ENCODE measurements at regions of chr22 and their contacts with region 1.

Region 1: DNA sequence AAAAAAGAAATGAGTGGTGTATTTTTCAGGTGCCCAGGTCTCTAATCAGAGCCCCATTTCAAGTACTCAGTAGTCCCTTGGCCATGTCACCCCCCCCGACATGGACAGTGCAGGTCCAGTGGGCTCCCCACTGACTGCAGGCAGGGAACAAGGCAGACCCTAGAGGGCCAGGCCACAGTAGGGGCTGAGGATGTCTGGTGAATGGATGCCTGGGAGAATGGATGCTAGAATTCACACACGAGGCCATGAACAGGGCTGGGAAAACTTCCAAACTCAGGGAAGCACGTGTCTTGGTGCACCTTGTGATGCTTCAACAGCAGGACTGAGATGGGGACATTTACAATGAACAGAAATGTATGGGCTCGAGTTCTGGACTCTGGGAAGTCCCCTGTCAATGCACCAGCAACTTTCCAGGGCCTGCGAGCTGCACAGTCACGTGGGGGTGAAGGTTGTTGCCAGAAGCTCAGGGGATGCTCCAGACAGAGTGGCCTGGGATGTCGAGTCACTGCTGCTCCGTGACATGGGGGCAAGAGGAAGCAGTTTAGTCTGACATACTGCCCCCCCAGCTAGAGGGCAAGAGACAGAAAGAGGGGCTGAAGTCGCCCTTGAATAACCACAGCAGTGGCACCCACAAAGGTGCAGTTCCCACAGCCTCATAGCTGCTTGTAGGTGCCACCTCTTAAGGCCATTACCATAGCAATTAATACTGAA is 3.1 kb downstream of the APOBEC3G start:
- DNase-seq: no peak
- H3K4me3 Mint-ChIP-seq: peak overlapping the region; percentile 19
- H3K27ac Mint-ChIP-seq: peak overlapping the region; percentile 55
- H3K4me1 Mint-ChIP-seq: peaks cover 53% of the 10 kb centered on the region
- H3K27me3 Mint-ChIP-seq: no peaks in the 10 kb centered on the region

Region 2: DNA sequence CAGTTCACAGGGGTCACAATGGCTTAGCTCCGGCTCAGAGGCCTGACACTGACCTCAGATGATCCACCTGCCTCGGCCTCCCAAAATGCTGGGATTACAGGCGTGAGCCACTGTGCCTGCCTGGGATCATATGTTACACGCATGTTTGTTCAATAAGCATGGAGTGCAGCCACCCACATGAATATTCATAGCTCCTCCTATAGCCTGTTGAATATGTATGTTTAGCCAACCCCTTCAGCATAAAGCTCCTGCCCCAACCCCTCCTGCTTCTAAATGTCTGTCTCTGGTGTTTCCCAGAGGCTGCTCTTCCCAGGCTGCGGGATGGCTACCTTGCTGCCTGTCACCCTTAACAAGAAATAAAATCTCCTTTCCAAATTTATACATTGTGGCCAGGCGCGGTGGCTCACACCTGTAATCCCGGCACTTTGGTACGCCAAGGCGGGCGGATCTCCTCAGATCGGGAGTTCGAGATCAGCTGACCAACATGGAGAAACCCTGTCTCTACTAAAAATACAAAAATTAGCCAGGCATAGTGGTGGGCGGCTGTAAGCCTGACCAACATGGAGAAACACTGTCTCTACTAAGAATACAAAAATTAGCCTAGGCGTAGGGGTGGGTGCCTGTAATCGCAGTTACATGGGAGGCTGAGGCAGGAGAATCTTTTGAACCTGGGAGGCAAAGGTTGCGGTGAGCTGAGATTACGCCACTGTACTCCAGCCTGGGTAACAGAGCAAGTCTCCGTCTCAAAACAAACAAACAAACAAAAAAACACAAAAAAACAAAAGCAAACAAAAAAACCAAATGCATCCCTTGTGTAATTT is 40.7 kb before region 1 on chr22:
- intact Hi-C with region 1: loop called (anchors 5 kb)
- DNase-seq: no peak
- H3K4me3 Mint-ChIP-seq: peak overlapping the region; percentile 74
- H3K27ac Mint-ChIP-seq: peak overlapping the region; percentile 81
- H3K4me1 Mint-ChIP-seq: peaks cover 27% of the 10 kb centered on the region
- H3K27me3 Mint-ChIP-seq: peaks cover 1% of the 10 kb centered on the region

Region 3: GRCh38 chr22:39090426-39091064 is 10.3 kb after region 1 on chr22:
- intact Hi-C with region 1: loop called (anchors 1 kb)
- DNase-seq: peak; percentile 81
- H3K4me3 Mint-ChIP-seq: peak overlapping the region; percentile 75
- H3K27ac Mint-ChIP-seq: peak overlapping the region; percentile 94
- H3K4me1 Mint-ChIP-seq: peaks cover 80% of the 10 kb centered on the region
- H3K27me3 Mint-ChIP-seq: no peaks in the 10 kb centered on the region